GM13976 (cell line): ENCODE measurements at regions of chr18 and their contacts with region 1.

Region 1: DNA sequence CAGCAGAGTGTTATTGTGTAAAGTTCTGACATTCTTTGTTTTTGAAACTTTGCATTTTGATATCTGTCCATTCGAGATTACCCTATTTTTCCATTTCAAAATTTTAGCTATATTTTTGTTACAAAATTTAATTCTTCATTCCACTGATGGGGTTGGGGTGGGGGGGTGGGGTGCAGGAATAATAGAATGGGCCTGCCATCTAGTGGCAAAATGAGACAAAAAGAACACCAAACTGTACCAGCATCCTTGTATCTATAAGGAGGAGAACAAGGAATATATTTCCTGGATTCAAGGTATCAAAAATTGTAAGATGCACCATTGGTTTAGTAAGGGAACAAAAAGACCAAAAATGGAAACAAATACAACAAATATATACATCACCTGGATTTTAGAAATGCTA is 27.9 kb upstream of the TTR start:
- DNase-seq: peak; percentile 31
- CTCF ChIP-seq: peak; percentile 33

Region 2: GRCh38 chr18:31710826-31711225 is 147.0 kb after region 1 on chr18:
- in situ Hi-C with region 1: loop called (anchors 10 kb)
- DNase-seq: no peak
- CTCF ChIP-seq: no peak